Heart right ventricle (tissue), 16 donors: ENCODE measurements at regions of chr1 and their contacts with region 1.

Region 1: GRCh38 chr1:14238472-14239307 is 359.8 kb upstream of the KAZN start:
- DNase-seq: peak; percentile 7 to 49
- ATAC-seq: peak in 7 of 8 donors; percentile 42 to 93 (median 82)
- H3K4me3 ChIP-seq: no peak overlapping the region
- H3K27ac ChIP-seq: peak overlapping the region in 1 of 10 donors; percentile 35
- H3K4me1 ChIP-seq: no peaks in the 10 kb centered on the region
- H3K27me3 ChIP-seq: peaks cover 0 to 13% (median 2%) of the 10 kb centered on the region in 7 donors
- CTCF ChIP-seq: no peak

Region 2: GRCh38 chr1:14285238-14285637 is 46.5 kb after region 1 on chr1:
- intact Hi-C with region 1: loop called in 1 of 10 experiments (anchors 5 kb)
- DNase-seq: no peak
- ATAC-seq: no peak
- H3K4me3 ChIP-seq: no peak overlapping the region
- H3K27ac ChIP-seq: no peak overlapping the region
- H3K4me1 ChIP-seq: no peaks in the 10 kb centered on the region
- H3K27me3 ChIP-seq: peaks cover 0 to 10% (median 0%) of the 10 kb centered on the region in 7 donors
- CTCF ChIP-seq: no peak

Region 3: GRCh38 chr1:14452551-14452950 is 213.9 kb after region 1 on chr1:
- intact Hi-C with region 1: no loop called
- DNase-seq: no peak
- ATAC-seq: no peak
- H3K4me3 ChIP-seq: no peak overlapping the region
- H3K27ac ChIP-seq: no peak overlapping the region
- H3K4me1 ChIP-seq: no peaks in the 10 kb centered on the region
- H3K27me3 ChIP-seq: peaks cover 0 to 6% (median 0%) of the 10 kb centered on the region in 7 donors
- CTCF ChIP-seq: no peak

Region 4: DNA sequence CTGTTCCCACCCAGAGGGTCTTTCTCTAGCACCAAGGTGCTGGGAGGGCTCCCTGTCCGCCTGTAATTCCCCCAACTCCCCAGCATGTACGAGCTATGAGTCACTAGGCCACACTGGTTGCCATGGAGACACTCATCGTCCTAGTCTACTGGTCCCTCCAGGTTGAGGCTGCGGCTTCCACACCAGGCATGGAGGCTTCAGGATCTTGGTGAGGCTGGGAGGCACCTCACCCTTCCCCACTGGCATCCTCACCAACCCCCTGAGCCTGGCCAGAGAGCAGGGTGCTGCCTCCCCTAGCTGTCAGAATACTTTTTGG is 284.2 kb after region 1 on chr1:
- intact Hi-C with region 1: loop called in 1 of 10 experiments (anchors 10 kb)
- DNase-seq: peak; percentile 6 to 17
- ATAC-seq: peak in 6 of 8 donors; percentile 43 to 83 (median 54)
- H3K4me3 ChIP-seq: no peak overlapping the region
- H3K27ac ChIP-seq: peak overlapping the region in 3 of 10 donors; percentile 20 to 68 (median 44)
- H3K4me1 ChIP-seq: peaks cover 0 to 3% (median 0%) of the 10 kb centered on the region in 9 donors
- H3K27me3 ChIP-seq: peaks cover 0 to 13% (median 10%) of the 10 kb centered on the region in 7 donors
- CTCF ChIP-seq: no peak